Heart right ventricle (tissue), 16 donors: ENCODE measurements at regions of chr4 and their contacts with region 1.

Region 1: GRCh38 chr4:186485561-186486062 is 69.8 kb downstream of the MTNR1A start:
- DNase-seq: no peak
- ATAC-seq: peak in 3 of 8 donors; percentile 24 to 48 (median 27)
- H3K4me3 ChIP-seq: peak overlapping the region in 5 of 10 donors; percentile 8 to 37 (median 26)
- H3K27ac ChIP-seq: no peak overlapping the region
- H3K4me1 ChIP-seq: no peaks in the 10 kb centered on the region
- H3K27me3 ChIP-seq: peaks cover 0 to 36% (median 10%) of the 10 kb centered on the region in 7 donors
- CTCF ChIP-seq: no peak

Region 2: DNA sequence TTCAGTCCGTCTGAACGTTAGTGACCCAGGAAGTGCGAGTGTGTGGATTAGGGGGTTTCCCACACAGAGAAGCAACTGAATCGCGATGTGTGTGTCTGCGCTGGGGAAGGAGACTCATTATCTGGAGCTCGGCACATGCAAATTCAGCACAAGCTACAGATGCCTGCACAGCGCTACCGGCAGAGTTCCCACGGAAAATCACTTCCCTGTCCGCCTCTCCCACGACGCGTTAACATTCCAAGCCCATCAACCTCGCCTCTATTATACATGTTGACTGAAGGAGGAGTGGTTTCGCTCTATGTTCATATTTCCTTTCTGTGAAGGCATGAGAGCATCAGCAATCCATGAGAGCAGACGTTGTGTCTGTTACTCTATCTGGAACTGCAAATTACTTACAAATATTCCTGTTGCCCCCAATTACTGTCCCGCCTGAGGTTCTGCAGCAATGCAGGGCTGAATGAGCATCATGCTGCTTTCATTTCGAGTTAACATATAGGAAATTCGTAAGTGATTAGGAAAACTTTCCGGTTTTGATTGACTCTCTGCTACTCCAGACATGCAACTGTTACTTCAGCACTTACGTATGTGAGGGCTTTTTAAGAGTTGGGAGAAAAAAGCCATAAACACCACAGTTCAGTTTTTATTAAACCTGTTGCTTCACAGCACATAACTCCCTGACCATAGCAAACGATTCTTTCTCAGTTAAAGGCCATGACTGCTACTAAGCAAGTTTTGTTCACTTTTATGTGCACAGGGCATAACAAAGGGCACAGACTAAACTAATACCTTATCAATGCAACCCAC is 84.8 kb after region 1 on chr4:
- intact Hi-C with region 1: loop called in 1 of 10 experiments (anchors 10 kb)
- DNase-seq: no peak
- ATAC-seq: peak in 1 of 8 donors; percentile 20
- H3K4me3 ChIP-seq: peak overlapping the region in 6 of 10 donors; percentile 15 to 41 (median 27)
- H3K27ac ChIP-seq: no peak overlapping the region
- H3K4me1 ChIP-seq: peaks cover 0 to 4% (median 0%) of the 10 kb centered on the region in 9 donors
- H3K27me3 ChIP-seq: peaks cover 0 to 46% (median 13%) of the 10 kb centered on the region in 7 donors
- CTCF ChIP-seq: no peak